Left ventricle myocardium inferior (tissue), 1 donor: ENCODE measurements at regions of chr3 and their contacts with region 1.

Region 1: GRCh38 chr3:46860017-46860830 is 3.0 kb downstream of the MYL3 start:
- DNase-seq: peak; percentile 44
- H3K4me3 ChIP-seq: peak overlapping the region; percentile 70
- H3K27ac ChIP-seq: peak overlapping the region; percentile 95
- H3K4me1 ChIP-seq: peaks cover 57% of the 10 kb centered on the region
- H3K27me3 ChIP-seq: no peaks in the 10 kb centered on the region
- CTCF ChIP-seq: peak; percentile 58

Region 2: GRCh38 chr3:46895204-46895660 is 35.0 kb after region 1 on chr3:
- intact Hi-C with region 1: loop called (anchors 5 kb)
- DNase-seq: peak; percentile 81
- H3K4me3 ChIP-seq: no peak overlapping the region
- H3K27ac ChIP-seq: peak overlapping the region; percentile 19
- H3K4me1 ChIP-seq: peaks cover 64% of the 10 kb centered on the region
- H3K27me3 ChIP-seq: peaks cover 28% of the 10 kb centered on the region
- CTCF ChIP-seq: peak; percentile 93